ENCODE measurements at regions of chr11 and their contacts with region 1.

Region 1: GRCh38 chr11:96412761-96413381 is 23.1 kb downstream of the JRKL start:
- DNase-seq: no peak
- H3K4me3 ChIP-seq: no peak overlapping the region
- H3K27ac ChIP-seq: no peak overlapping the region
- H3K4me1 ChIP-seq: no peaks in the 10 kb centered on the region
- H3K27me3 ChIP-seq: no peaks in the 10 kb centered on the region
- CTCF ChIP-seq: no peak
- EP300 ChIP-seq: no peak
- POLR2A ChIP-seq: no peak
- RAD21 ChIP-seq: no peak

Region 2: GRCh38 chr11:96424693-96425092 is 11.8 kb after region 1 on chr11:
- CTCF ChIA-PET with region 1: interaction called, 10 read pairs
- POLR2A ChIA-PET with region 1: no interaction called
- DNase-seq: no peak
- H3K4me3 ChIP-seq: no peak overlapping the region
- H3K27ac ChIP-seq: no peak overlapping the region
- H3K4me1 ChIP-seq: peaks cover 0 to 2% (median 0%) of the 10 kb centered on the region in 4 experiments; a peak in 2 of 7 replicates
- H3K27me3 ChIP-seq: no peaks in the 10 kb centered on the region
- CTCF ChIP-seq: no peak
- EP300 ChIP-seq: no peak
- POLR2A ChIP-seq: no peak
- RAD21 ChIP-seq: no peak

Region 3: DNA sequence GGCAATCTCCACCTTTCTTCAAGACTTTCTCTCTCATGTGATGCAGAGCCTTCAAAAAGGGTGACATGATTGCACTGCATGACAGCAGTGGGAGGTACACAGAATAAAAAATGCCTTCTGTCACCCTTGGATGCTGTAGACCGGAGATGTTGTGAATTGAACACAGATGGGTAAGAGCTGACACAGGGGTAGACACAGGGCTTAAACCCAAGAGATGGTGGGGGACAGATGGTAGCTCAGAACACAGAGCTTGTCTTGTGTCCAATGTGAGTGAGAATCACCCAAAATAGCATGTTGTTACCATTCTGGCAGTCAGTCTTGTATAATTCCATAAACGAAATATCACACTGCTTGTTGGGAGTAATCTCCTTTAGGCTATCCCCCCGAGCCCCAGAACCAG is 46.9 kb after region 1 on chr11:
- CTCF ChIA-PET with region 1: no interaction called
- POLR2A ChIA-PET with region 1: no interaction called
- DNase-seq: no peak
- H3K4me3 ChIP-seq: no peak overlapping the region
- H3K27ac ChIP-seq: no peak overlapping the region
- H3K4me1 ChIP-seq: peaks cover 0 to 3% (median 0%) of the 10 kb centered on the region in 4 experiments; a peak in 2 of 7 replicates
- H3K27me3 ChIP-seq: peaks cover 0 to 2% (median 0%) of the 10 kb centered on the region in 4 experiments; a peak in 1 of 7 replicates
- CTCF ChIP-seq: no peak
- EP300 ChIP-seq: no peak
- POLR2A ChIP-seq: no peak
- RAD21 ChIP-seq: no peak

Region 4: DNA sequence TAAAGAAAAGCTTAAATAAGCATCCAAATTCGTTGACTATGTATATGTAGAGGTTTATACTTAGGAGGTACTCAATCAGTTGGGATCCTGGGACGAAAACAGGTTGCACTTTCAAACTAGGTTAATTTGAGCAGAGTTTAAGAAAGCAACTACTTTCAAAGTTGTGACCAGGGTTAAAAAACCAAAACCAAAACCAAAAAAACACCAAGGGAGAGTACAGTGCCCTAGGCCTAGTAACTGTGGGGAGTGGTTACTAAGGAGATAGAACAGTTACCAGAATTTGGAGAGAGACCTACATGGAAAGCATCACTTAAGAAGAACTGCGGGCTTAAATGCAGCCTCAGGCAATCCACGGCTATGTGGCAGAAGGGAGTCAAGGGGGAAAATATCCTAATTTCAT is 125.2 kb after region 1 on chr11:
- CTCF ChIA-PET with region 1: no interaction called
- POLR2A ChIA-PET with region 1: no interaction called
- DNase-seq: no peak
- H3K4me3 ChIP-seq: no peak overlapping the region
- H3K27ac ChIP-seq: no peak overlapping the region
- H3K4me1 ChIP-seq: no peaks in the 10 kb centered on the region
- H3K27me3 ChIP-seq: no peaks in the 10 kb centered on the region
- CTCF ChIP-seq: no peak
- EP300 ChIP-seq: no peak
- POLR2A ChIP-seq: no peak
- RAD21 ChIP-seq: no peak

Measured in H1 (cell line).